ENCODE measurements at regions of chr11 and their contacts with region 1.

Region 1: GRCh38 chr11:128251140-128251539 is 336.2 kb downstream of the ETS1 start:
- DNase-seq: no peak
- H3K4me3 ChIP-seq: no peak overlapping the region
- H3K27ac ChIP-seq: no peak overlapping the region
- H3K4me1 ChIP-seq: no peaks in the 10 kb centered on the region
- H3K27me3 ChIP-seq: peaks cover 23% of the 10 kb centered on the region
- CTCF ChIP-seq: no peak

Region 2: DNA sequence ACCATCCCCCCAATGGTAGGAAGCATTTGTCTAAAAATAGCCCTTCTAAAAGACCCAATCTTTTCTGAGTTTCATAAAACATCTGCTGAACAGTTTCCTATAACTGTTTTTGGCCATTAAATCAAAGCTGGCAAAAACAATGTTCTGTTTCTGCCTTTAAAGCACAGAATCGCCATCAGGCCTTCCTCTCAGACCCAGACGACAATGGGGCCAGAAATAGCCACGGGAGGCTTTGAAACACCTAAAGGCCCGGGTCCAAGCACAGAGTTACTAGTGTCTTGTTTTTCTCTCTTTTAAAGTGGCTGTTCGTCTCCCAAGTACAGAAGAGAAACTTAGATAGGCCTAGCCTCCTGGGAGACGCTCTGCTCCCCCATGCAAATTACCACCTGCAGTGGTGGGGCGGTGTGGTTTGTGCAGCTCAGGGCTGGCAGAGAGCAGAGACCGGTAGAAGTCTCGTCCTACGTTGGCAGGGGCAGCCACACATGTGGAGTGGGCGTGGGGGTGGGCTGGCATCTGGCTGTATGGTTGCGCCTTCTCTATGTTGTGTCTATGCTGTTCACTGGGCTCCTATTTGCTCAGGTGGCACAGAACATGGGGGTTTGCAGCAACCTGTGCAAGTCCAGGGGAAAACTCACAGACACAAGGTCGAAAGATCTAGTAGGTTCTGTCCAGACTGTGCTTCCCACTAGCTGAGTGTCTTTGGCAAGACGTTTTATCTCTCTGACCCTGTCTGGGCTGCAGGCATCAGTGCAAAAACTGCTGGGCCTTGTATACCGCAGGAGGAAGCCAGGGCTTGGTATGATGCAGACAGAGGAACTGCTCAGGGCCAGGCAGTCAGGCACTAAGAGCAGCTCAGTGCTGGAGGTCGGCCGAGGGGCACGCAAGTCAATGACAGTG is 359.8 kb after region 1 on chr11:
- CTCF ChIA-PET with region 1: no interaction called
- POLR2A ChIA-PET with region 1: interaction called, 25 read pairs
- intact Hi-C with region 1: no loop called
- DNase-seq: no peak
- H3K4me3 ChIP-seq: no peak overlapping the region
- H3K27ac ChIP-seq: no peak overlapping the region
- H3K4me1 ChIP-seq: no peaks in the 10 kb centered on the region
- H3K27me3 ChIP-seq: peaks cover 91% of the 10 kb centered on the region
- CTCF ChIP-seq: no peak

Measured in A673 (cell line).